A673 (cell line): ENCODE measurements at regions of chr15 and their contacts with region 1.

Region 1: GRCh38 chr15:78872972-78873792 is 492 bp downstream of the MORF4L1 start:
- DNase-seq: peak; percentile 97
- H3K4me3 ChIP-seq: peak overlapping the region; percentile 78
- H3K27ac ChIP-seq: peak overlapping the region; percentile 100
- H3K4me1 ChIP-seq: peaks cover 30% of the 10 kb centered on the region
- H3K27me3 ChIP-seq: no peaks in the 10 kb centered on the region
- CTCF ChIP-seq: peak; percentile 67

Region 2: GRCh38 chr15:77201665-77202064 is 1671.5 kb before region 1 on chr15:
- CTCF ChIA-PET with region 1: no interaction called
- POLR2A ChIA-PET with region 1: interaction called, 15 read pairs
- intact Hi-C with region 1: no loop called
- DNase-seq: no peak
- H3K4me3 ChIP-seq: no peak overlapping the region
- H3K27ac ChIP-seq: no peak overlapping the region
- H3K4me1 ChIP-seq: peaks cover 6% of the 10 kb centered on the region
- H3K27me3 ChIP-seq: no peaks in the 10 kb centered on the region
- CTCF ChIP-seq: no peak

Region 3: GRCh38 chr15:78492872-78493271 is 380.3 kb before region 1 on chr15:
- CTCF ChIA-PET with region 1: no interaction called
- POLR2A ChIA-PET with region 1: no interaction called
- intact Hi-C with region 1: no loop called
- DNase-seq: no peak
- H3K4me3 ChIP-seq: no peak overlapping the region
- H3K27ac ChIP-seq: no peak overlapping the region
- H3K4me1 ChIP-seq: peaks cover 4% of the 10 kb centered on the region
- H3K27me3 ChIP-seq: no peaks in the 10 kb centered on the region
- CTCF ChIP-seq: no peak

Region 4: GRCh38 chr15:78889000-78889399 is 15.8 kb after region 1 on chr15:
- CTCF ChIA-PET with region 1: no interaction called
- POLR2A ChIA-PET with region 1: interaction called, 21 read pairs
- intact Hi-C with region 1: no loop called
- DNase-seq: no peak
- H3K4me3 ChIP-seq: no peak overlapping the region
- H3K27ac ChIP-seq: no peak overlapping the region
- H3K4me1 ChIP-seq: peaks cover 12% of the 10 kb centered on the region
- H3K27me3 ChIP-seq: no peaks in the 10 kb centered on the region
- CTCF ChIP-seq: no peak

Region 5: DNA sequence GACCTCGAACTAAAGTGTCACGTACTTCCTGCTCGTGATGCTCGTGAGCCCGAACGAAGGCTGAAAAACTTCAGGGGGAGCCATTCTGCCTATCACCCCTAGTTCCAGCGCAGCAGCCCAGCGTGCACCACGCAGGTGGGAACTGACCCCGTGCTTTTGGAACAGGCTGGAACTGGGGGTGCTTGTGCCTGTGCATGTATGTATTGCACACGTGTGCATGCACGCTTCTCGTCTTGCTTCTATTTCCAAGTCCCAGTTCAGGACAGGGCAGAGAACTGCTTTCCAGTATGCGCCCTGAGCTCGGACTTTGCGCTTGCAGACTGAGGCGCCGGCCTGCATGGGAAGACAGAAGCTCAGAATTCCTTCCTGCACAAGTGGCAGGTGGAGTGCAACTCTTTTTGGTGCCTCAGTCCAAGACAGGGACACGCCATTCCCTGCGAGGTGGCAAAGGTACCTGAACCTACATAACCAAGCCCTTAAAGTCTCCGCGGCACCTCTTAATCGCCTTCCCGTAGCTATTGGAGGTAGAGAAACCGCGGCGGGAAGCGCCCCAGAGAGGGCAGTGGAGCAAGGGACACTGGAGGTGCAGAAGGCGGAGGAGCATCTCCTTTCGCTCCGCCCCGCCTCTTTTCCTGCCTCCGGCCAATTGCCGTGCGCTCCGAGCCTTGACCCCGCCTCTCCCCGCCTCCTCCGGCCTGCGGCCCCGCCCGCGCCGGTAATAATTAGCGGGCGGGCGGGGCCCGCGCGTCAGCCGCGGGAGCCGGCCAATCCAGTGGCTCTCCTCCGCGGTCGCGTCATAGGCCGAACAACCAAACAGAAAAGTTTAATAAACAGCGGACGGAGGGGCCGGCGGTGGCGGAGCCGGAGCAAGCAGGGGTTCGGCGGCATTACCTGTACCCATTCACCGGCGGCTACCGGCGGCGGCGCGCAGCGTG is 1185.9 kb after region 1 on chr15 and contains the start of gene ZFAND6:
- CTCF ChIA-PET with region 1: no interaction called
- POLR2A ChIA-PET with region 1: no interaction called
- intact Hi-C with region 1: loop called (anchors 5 kb)
- DNase-seq: peak; percentile 97
- H3K4me3 ChIP-seq: peak within 1 kb of the TSS; percentile 73
- H3K27ac ChIP-seq: peak within 1 kb of the TSS; percentile 92
- H3K4me1 ChIP-seq: peaks cover 21% of the 10 kb centered on the region
- H3K27me3 ChIP-seq: no peaks in the 10 kb centered on the region
- CTCF ChIP-seq: no peak
- total RNA-seq, gene ZFAND6: 41.4 and 42.8 TPM in 2 replicates

Region 6: GRCh38 chr15:80455668-80456442 is 1582.7 kb after region 1 on chr15:
- CTCF ChIA-PET with region 1: no interaction called
- POLR2A ChIA-PET with region 1: no interaction called
- intact Hi-C with region 1: no loop called
- DNase-seq: peak; percentile 66
- H3K4me3 ChIP-seq: no peak overlapping the region
- H3K27ac ChIP-seq: no peak overlapping the region
- H3K4me1 ChIP-seq: no peaks in the 10 kb centered on the region
- H3K27me3 ChIP-seq: no peaks in the 10 kb centered on the region
- CTCF ChIP-seq: peak; percentile 93